ENCODE measurements at regions of chr20 and their contacts with region 1.

Region 1: DNA sequence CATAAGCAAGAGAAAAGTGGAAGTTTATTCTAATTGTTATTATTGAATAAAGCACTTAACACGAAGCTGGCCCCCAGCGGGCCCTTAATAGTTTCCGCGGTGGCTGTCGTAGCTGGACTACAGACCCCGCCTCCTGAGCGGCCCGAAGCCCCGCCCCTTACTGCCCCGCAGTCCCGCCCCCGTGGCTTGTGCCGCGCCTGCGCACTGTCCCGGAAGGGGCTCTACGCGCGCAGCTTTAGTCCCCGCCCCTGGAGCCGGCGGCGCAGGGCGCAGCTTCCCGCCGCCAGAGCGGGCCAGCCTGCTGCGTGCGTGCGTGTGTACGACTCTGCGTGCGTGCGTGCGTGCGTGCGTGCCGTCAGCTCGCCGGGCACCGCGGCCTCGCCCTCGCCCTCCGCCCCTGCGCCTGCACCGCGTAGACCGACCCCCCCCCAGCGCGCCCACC is at the start of gene VAPB:
- DNase-seq: peak; percentile 94 to 99
- H3K4me3 ChIP-seq: peak within 1 kb of the TSS; percentile 55 to 79 (median 68)
- H3K27ac ChIP-seq: peak within 1 kb of the TSS; percentile 81; the same call in 1 of the 2 replicates
- H3K4me1 ChIP-seq: peaks cover 5 to 9% (median 6%) of the 10 kb centered on the region in 4 experiments; a peak in 6 of 7 replicates
- H3K27me3 ChIP-seq: no peaks in the 10 kb centered on the region
- CTCF ChIP-seq: peak in 1 of 3 experiments; percentile 4; a peak in 1 of 4 replicates
- EP300 ChIP-seq: no peak
- POLR2A ChIP-seq: peak in 1 of 2 experiments; percentile 59; a peak in 1 of 3 replicates
- RAD21 ChIP-seq: no peak
- total RNA-seq, gene VAPB: 57.1 and 62.8 TPM in 2 replicates

Region 2: GRCh38 chr20:58374906-58375791 is 13.8 kb before region 1 on chr20:
- CTCF ChIA-PET with region 1: interaction called, 4 read pairs
- POLR2A ChIA-PET with region 1: interaction called, 12 read pairs
- DNase-seq: peak; percentile 36 to 60
- H3K4me3 ChIP-seq: peak overlapping the region; percentile 22 to 46 (median 28); a peak in 7 of 8 replicates
- H3K27ac ChIP-seq: peak overlapping the region; percentile 89
- H3K4me1 ChIP-seq: peaks cover 14 to 28% (median 22%) of the 10 kb centered on the region in 4 experiments
- H3K27me3 ChIP-seq: no peaks in the 10 kb centered on the region
- CTCF ChIP-seq: no peak
- EP300 ChIP-seq: peak in 1 of 2 experiments; percentile 30; a peak in 1 of 3 replicates
- POLR2A ChIP-seq: peak in 1 of 2 experiments; percentile 35; a peak in 1 of 3 replicates
- RAD21 ChIP-seq: 0 out of 4 replicates have a peak, but pooled peaks of 1 of the 2 experiments have one; percentile 7

Measured in H1 (cell line).